ENCODE measurements at regions of chr10 and their contacts with region 1.

Region 1: GRCh38 chr10:26890956-26891355 is 30.2 kb upstream of the ABI1 start:
- DNase-seq: peak; percentile 72
- ATAC-seq: peak; percentile 82
- H3K4me3 ChIP-seq: no peak overlapping the region
- H3K27ac ChIP-seq: no peak overlapping the region
- H3K4me1 ChIP-seq: no peaks in the 10 kb centered on the region
- H3K27me3 ChIP-seq: peaks cover 0 to 4% of the 10 kb centered on the region in 2 experiments; a peak in 1 of 5 replicates
- CTCF ChIP-seq: peak; percentile 79
- EP300 ChIP-seq: no peak
- POLR2A ChIP-seq: no peak
- RAD21 ChIP-seq: peak; percentile 24; the same call in 1 of the 2 replicates

Region 2: GRCh38 chr10:26869528-26869927 is 21.4 kb before region 1 on chr10:
- CTCF ChIA-PET with region 1: no interaction called
- POLR2A ChIA-PET with region 1: no interaction called
- in situ Hi-C with region 1: no loop called
- intact Hi-C with region 1: no loop called
- DNase-seq: peak; percentile 26
- ATAC-seq: peak; percentile 33; the same call in 2 of the 3 replicates
- H3K4me3 ChIP-seq: peak overlapping the region in 1 of 3 experiments; percentile 16; a peak in 1 of 6 replicates
- H3K27ac ChIP-seq: no peak overlapping the region
- H3K4me1 ChIP-seq: peaks cover 16% of the 10 kb centered on the region
- H3K27me3 ChIP-seq: peaks cover 0 to 7% of the 10 kb centered on the region in 2 experiments; a peak in 1 of 5 replicates
- CTCF ChIP-seq: no peak
- EP300 ChIP-seq: no peak
- POLR2A ChIP-seq: no peak
- RAD21 ChIP-seq: no peak

Region 3: DNA sequence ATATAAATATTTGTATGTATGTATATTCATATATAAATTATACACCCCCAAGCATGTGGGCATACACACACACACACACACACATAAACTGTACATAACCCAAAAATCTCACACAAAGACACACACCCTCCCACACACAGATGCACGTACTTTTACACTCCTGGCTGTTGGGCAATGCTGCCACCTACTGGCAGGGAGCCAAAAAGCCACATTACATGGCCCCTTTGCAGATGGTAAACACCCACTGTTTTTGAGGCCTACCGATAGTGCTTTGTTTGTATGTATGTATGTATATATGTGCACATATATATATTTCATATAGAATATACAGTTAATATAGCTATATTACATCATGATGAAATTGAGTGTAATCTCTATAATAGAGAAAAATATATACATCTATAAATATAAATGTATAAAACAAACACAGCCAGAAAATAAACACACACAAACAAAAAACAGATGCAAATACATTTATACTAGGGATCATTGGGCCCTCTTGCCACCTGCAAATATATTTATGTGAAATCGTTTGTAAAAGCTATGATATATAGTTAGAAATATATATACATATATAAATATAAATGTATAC is 469.7 kb after region 1 on chr10:
- CTCF ChIA-PET with region 1: interaction called, 20 read pairs
- POLR2A ChIA-PET with region 1: no interaction called
- in situ Hi-C with region 1: loop called (anchors 5 kb)
- intact Hi-C with region 1: loop called (anchors 1 kb)
- DNase-seq: peak; percentile 64
- ATAC-seq: peak; percentile 89
- H3K4me3 ChIP-seq: no peak overlapping the region
- H3K27ac ChIP-seq: no peak overlapping the region
- H3K4me1 ChIP-seq: no peaks in the 10 kb centered on the region
- H3K27me3 ChIP-seq: no peaks in the 10 kb centered on the region; a peak in 1 of 5 replicates
- CTCF ChIP-seq: peak; percentile 93
- EP300 ChIP-seq: no peak
- POLR2A ChIP-seq: no peak
- RAD21 ChIP-seq: peak; percentile 74